ENCODE measurements at regions of chr5 and their contacts with region 1.

Region 1: DNA sequence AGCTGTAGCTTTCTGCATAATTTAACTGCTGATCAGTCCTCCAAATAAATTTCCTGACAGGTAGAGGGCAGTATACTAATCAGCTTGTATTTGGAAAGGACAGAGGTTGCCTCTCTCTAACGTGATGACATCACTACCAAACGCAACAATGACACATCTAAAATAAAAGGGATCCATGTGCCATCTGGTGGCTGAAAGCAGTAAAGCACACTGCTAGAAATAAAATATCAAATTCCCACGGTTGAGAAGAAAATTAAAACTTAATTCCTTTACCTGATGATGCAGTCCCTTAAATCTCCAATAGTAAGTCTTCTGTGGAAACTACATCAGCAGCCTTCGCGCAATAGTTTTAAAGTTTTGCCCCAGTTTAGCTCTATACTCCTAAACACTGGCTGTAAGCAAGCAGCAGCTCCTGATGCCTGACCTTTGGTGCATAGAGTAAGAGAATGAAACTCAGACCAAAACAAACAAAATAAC is 54.5 kb downstream of the DIAPH1 start:
- DNase-seq: peak; percentile 44 to 76 (median 51)
- H3K4me3 ChIP-seq: no peak overlapping the region
- H3K27ac ChIP-seq: peak overlapping the region in 1 of 2 donors; percentile 39
- H3K4me1 ChIP-seq: peaks cover 2% of the 10 kb centered on the region
- H3K27me3 ChIP-seq: no peaks in the 10 kb centered on the region
- CTCF ChIP-seq: peak; percentile 98 to 100 (median 100)
- EP300 ChIP-seq: no peak
- POLR2A ChIP-seq: no peak

Region 2: GRCh38 chr5:140966293-140967225 is 597.7 kb before region 1 on chr5 and contains the start of gene PCDHAC2:
- intact Hi-C with region 1: no loop called
- DNase-seq: peak in 4 of 5 donors; percentile 8 to 40 (median 18)
- H3K4me3 ChIP-seq: peak within 1 kb of the TSS; percentile 50
- H3K27ac ChIP-seq: no peak within 1 kb of the TSS
- H3K4me1 ChIP-seq: peaks cover 2% of the 10 kb centered on the region
- H3K27me3 ChIP-seq: no peaks in the 10 kb centered on the region
- CTCF ChIP-seq: no peak
- EP300 ChIP-seq: no peak
- POLR2A ChIP-seq: no peak
- total RNA-seq, gene PCDHAC2: 0.15 to 2.1 (median 0.72) TPM

Region 3: GRCh38 chr5:141172378-141173204 is 391.7 kb before region 1 on chr5 and contains the start of gene PCDHB7:
- intact Hi-C with region 1: loop called in 1 of 4 experiments (anchors 10 kb)
- DNase-seq: peak in 4 of 5 donors; percentile 28 to 55 (median 46)
- H3K4me3 ChIP-seq: no peak within 1 kb of the TSS
- H3K27ac ChIP-seq: no peak within 1 kb of the TSS
- H3K4me1 ChIP-seq: no peaks in the 10 kb centered on the region
- H3K27me3 ChIP-seq: no peaks in the 10 kb centered on the region
- CTCF ChIP-seq: peak in 1 of 3 donors; percentile 21
- EP300 ChIP-seq: no peak
- POLR2A ChIP-seq: no peak
- total RNA-seq, gene PCDHB7: 1.4 to 5.1 (median 4.0) TPM

Region 4: GRCh38 chr5:141199359-141200235 is 364.7 kb before region 1 on chr5 and contains the start of gene PCDHB11:
- intact Hi-C with region 1: no loop called
- DNase-seq: no peak
- H3K4me3 ChIP-seq: no peak within 1 kb of the TSS
- H3K27ac ChIP-seq: no peak within 1 kb of the TSS
- H3K4me1 ChIP-seq: no peaks in the 10 kb centered on the region
- H3K27me3 ChIP-seq: no peaks in the 10 kb centered on the region
- CTCF ChIP-seq: no peak
- EP300 ChIP-seq: no peak
- POLR2A ChIP-seq: no peak
- total RNA-seq, gene PCDHB11: 2.5 to 9.2 (median 6.0) TPM

Region 5: DNA sequence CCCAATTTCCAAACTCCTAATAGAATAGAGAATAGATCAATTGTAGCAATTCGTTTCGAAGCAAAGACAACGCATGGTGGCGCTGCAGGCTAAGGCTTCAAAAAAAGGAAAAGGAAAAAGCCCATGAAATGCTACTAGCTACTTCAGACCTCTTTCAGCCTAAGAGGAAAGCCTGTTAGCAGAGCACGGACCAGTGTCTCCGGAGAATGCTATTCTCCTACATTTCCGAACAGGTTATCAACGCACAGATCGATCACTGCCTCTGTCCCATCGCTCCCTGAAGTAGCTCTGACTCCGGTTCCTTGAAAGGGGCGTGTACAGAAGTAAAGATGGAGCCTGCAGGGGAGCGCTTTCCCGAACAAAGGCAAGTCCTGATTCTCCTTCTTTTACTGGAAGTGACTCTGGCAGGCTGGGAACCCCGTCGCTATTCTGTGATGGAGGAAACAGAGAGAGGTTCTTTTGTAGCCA is 319.0 kb before region 1 on chr5 and contains the start of gene PCDHB15:
- intact Hi-C with region 1: loop called in 1 of 4 experiments (anchors 10 kb)
- DNase-seq: peak; percentile 18 to 63 (median 56)
- H3K4me3 ChIP-seq: peak within 1 kb of the TSS; percentile 21
- H3K27ac ChIP-seq: no peak within 1 kb of the TSS
- H3K4me1 ChIP-seq: no peaks in the 10 kb centered on the region
- H3K27me3 ChIP-seq: no peaks in the 10 kb centered on the region
- CTCF ChIP-seq: peak in 1 of 3 donors; percentile 19
- EP300 ChIP-seq: no peak
- POLR2A ChIP-seq: no peak
- total RNA-seq, gene PCDHB15: 3.4 to 17.0 (median 10.3) TPM

Region 6: GRCh38 chr5:141320225-141321169 is 243.8 kb before region 1 on chr5 and contains the start of gene TAF7:
- intact Hi-C with region 1: loop called in 2 of 4 experiments (anchors 5 to 10 kb)
- DNase-seq: peak; percentile 92 to 95 (median 95)
- H3K4me3 ChIP-seq: peak within 1 kb of the TSS; percentile 84
- H3K27ac ChIP-seq: peak within 1 kb of the TSS; percentile 85 to 99
- H3K4me1 ChIP-seq: peaks cover 3% of the 10 kb centered on the region
- H3K27me3 ChIP-seq: no peaks in the 10 kb centered on the region
- CTCF ChIP-seq: peak; percentile 61 to 84 (median 66)
- EP300 ChIP-seq: peak; percentile 37
- POLR2A ChIP-seq: peak; percentile 98
- total RNA-seq, gene TAF7: 65.1 to 141 (median 102) TPM

Region 7: GRCh38 chr5:141475625-141476131 is 88.6 kb before region 1 on chr5 and contains the start of gene PCDHGC3:
- intact Hi-C with region 1: loop called in 1 of 4 experiments (anchors 5 kb)
- DNase-seq: peak; percentile 91 to 94 (median 93)
- H3K4me3 ChIP-seq: peak within 1 kb of the TSS; percentile 59
- H3K27ac ChIP-seq: peak within 1 kb of the TSS; percentile 26 to 75
- H3K4me1 ChIP-seq: peaks cover 17% of the 10 kb centered on the region
- H3K27me3 ChIP-seq: no peaks in the 10 kb centered on the region
- CTCF ChIP-seq: peak in 2 of 3 donors; percentile 50 to 73
- EP300 ChIP-seq: no peak
- POLR2A ChIP-seq: peak; percentile 77
- total RNA-seq, gene PCDHGC3: 19.6 to 85.3 (median 67.7) TPM

Region 8: DNA sequence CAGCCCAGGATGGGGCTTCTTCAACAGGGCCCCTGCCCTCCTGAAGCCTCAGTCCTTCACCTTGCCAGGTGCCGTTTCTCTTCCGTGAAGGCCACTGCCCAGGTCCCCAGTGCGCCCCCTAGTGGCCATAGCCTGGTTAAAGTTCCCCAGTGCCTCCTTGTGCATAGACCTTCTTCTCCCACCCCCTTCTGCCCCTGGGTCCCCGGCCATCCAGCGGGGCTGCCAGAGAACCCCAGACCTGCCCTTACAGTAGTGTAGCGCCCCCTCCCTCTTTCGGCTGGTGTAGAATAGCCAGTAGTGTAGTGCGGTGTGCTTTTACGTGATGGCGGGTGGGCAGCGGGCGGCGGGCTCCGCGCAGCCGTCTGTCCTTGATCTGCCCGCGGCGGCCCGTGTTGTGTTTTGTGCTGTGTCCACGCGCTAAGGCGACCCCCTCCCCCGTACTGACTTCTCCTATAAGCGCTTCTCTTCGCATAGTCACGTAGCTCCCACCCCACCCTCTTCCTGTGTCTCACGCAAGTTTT is 51.8 kb before region 1 on chr5:
- intact Hi-C with region 1: loop called in 2 of 4 experiments (anchors 5 kb)
- DNase-seq: peak; percentile 82 to 91 (median 89)
- H3K4me3 ChIP-seq: peak overlapping the region; percentile 64
- H3K27ac ChIP-seq: peak overlapping the region; percentile 74 to 82
- H3K4me1 ChIP-seq: peaks cover 17% of the 10 kb centered on the region
- H3K27me3 ChIP-seq: no peaks in the 10 kb centered on the region
- CTCF ChIP-seq: peak; percentile 76 to 82 (median 80)
- EP300 ChIP-seq: no peak
- POLR2A ChIP-seq: no peak

Region 9: GRCh38 chr5:141524604-141525597 is 39.4 kb before region 1 on chr5:
- intact Hi-C with region 1: loop called in 1 of 4 experiments (anchors 5 kb)
- DNase-seq: peak; percentile 87 to 92 (median 92)
- H3K4me3 ChIP-seq: no peak overlapping the region
- H3K27ac ChIP-seq: peak overlapping the region in 1 of 2 donors; percentile 61
- H3K4me1 ChIP-seq: peaks cover 2% of the 10 kb centered on the region
- H3K27me3 ChIP-seq: no peaks in the 10 kb centered on the region
- CTCF ChIP-seq: peak; percentile 99 to 100 (median 100)
- EP300 ChIP-seq: no peak
- POLR2A ChIP-seq: no peak

Measured in ovary (tissue), 10 donors.